ENCODE measurements at regions of chr17 and their contacts with region 1.

Region 1: GRCh38 chr17:57995076-57995956 is 7.3 kb upstream of the VEZF1 start:
- DNase-seq: no peak
- ATAC-seq: peak; percentile 87
- H3K4me3 ChIP-seq: no peak overlapping the region
- H3K27ac ChIP-seq: no peak overlapping the region
- H3K4me1 ChIP-seq: peaks cover 22% of the 10 kb centered on the region
- H3K27me3 ChIP-seq: no peaks in the 10 kb centered on the region
- CTCF ChIP-seq: peak; percentile 69 to 81 (median 75)
- EP300 ChIP-seq: no peak
- POLR2A ChIP-seq: peak; percentile 81
- RAD21 ChIP-seq: peak; percentile 83

Region 2: DNA sequence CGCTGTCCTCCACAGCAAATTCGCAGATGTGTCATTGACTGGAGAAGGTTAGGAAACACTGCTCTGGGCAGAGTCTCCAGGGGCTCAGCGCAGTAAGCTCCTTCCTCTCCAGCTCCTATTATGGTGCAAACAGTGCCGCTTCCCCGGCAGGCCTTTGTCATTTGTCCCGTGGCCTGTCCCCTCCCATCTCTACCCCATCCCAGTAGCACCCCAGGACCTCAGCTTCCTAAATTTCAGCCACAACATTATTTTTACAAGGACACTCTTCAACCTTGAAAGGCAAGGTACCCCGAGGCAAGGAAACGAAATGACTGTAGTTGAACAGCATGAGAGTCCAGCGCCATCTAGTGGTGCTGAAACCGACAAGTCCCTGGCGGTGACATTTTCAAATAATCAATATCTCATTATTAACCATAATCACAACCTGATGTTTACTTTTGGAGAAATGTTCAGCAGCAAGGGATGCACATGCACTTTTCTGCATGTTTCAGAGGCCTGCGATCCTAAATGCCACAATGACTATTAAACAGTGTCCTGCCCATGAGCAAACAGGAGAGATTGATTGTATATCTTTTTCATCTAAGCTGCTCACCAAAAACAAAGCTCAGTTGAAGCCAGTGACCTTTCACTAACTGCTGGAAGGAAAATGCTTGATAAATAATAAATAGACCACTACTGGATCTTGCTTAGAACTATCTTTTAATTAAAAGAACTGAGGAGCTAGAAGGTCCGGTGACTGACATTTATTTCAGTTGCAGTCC is 162.0 kb before region 1 on chr17:
- CTCF ChIA-PET with region 1: interaction called, 21 read pairs
- POLR2A ChIA-PET with region 1: no interaction called
- RAD21 ChIA-PET with region 1: no interaction called
- SMC1A ChIA-PET with region 1: no interaction called
- in situ Hi-C with region 1: no loop called
- intact Hi-C with region 1: no loop called
- DNase-seq: no peak
- ATAC-seq: peak; percentile 95
- H3K4me3 ChIP-seq: 0 out of 2 replicates have a peak overlapping the region, but pooled peaks have one; percentile 4
- H3K27ac ChIP-seq: no peak overlapping the region
- H3K4me1 ChIP-seq: peaks cover 5% of the 10 kb centered on the region; the same call in 1 of the 2 replicates
- H3K27me3 ChIP-seq: no peaks in the 10 kb centered on the region
- CTCF ChIP-seq: peak; percentile 87 to 94 (median 92)
- EP300 ChIP-seq: no peak
- POLR2A ChIP-seq: no peak
- RAD21 ChIP-seq: peak; percentile 74

Region 3: GRCh38 chr17:57868007-57868909 is 127.1 kb before region 1 on chr17:
- CTCF ChIA-PET with region 1: interaction called, 708 read pairs
- POLR2A ChIA-PET with region 1: interaction called, 5 read pairs
- RAD21 ChIA-PET with region 1: interaction called, 6 read pairs
- SMC1A ChIA-PET with region 1: interaction called, 341 read pairs
- in situ Hi-C with region 1: no loop called
- intact Hi-C with region 1: no loop called
- DNase-seq: peak; percentile 47
- ATAC-seq: peak; percentile 93
- H3K4me3 ChIP-seq: no peak overlapping the region
- H3K27ac ChIP-seq: no peak overlapping the region; the same call in 1 of the 2 replicates
- H3K4me1 ChIP-seq: peaks cover 20% of the 10 kb centered on the region
- H3K27me3 ChIP-seq: no peaks in the 10 kb centered on the region; a peak in 1 of 4 replicates
- CTCF ChIP-seq: peak; percentile 7 to 32 (median 32); a peak in 3 of 6 replicates
- EP300 ChIP-seq: no peak
- POLR2A ChIP-seq: no peak
- RAD21 ChIP-seq: no peak

Region 4: GRCh38 chr17:57902800-57903759 is 92.2 kb before region 1 on chr17:
- CTCF ChIA-PET with region 1: interaction called, 134 read pairs
- POLR2A ChIA-PET with region 1: interaction called, 9 read pairs
- RAD21 ChIA-PET with region 1: interaction called, 18 read pairs
- SMC1A ChIA-PET with region 1: interaction called, 26 read pairs
- in situ Hi-C with region 1: loop called (anchors 10 kb)
- intact Hi-C with region 1: no loop called
- DNase-seq: peak; percentile 89
- ATAC-seq: peak; percentile 82
- H3K4me3 ChIP-seq: peak overlapping the region; percentile 35; the same call in 1 of the 2 replicates
- H3K27ac ChIP-seq: peak overlapping the region; percentile 85
- H3K4me1 ChIP-seq: peaks cover 58% of the 10 kb centered on the region
- H3K27me3 ChIP-seq: no peaks in the 10 kb centered on the region
- CTCF ChIP-seq: no peak
- EP300 ChIP-seq: peak; percentile 53 to 77; a peak in 3 of 4 replicates
- POLR2A ChIP-seq: 0 out of 2 replicates have a peak, but pooled peaks have one; percentile 27
- RAD21 ChIP-seq: peak; percentile 26; the same call in 1 of the 2 replicates

Region 5: GRCh38 chr17:57946798-57947358 is 48.4 kb before region 1 on chr17:
- CTCF ChIA-PET with region 1: interaction called, 55 read pairs
- POLR2A ChIA-PET with region 1: interaction called, 6 read pairs
- RAD21 ChIA-PET with region 1: interaction called, 13 read pairs
- SMC1A ChIA-PET with region 1: interaction called, 33 read pairs
- in situ Hi-C with region 1: no loop called
- intact Hi-C with region 1: no loop called
- DNase-seq: peak; percentile 73
- ATAC-seq: peak; percentile 90
- H3K4me3 ChIP-seq: peak overlapping the region; percentile 28; the same call in 1 of the 2 replicates
- H3K27ac ChIP-seq: no peak overlapping the region
- H3K4me1 ChIP-seq: peaks cover 54% of the 10 kb centered on the region
- H3K27me3 ChIP-seq: no peaks in the 10 kb centered on the region
- CTCF ChIP-seq: no peak
- EP300 ChIP-seq: no peak
- POLR2A ChIP-seq: no peak
- RAD21 ChIP-seq: no peak

Region 6: DNA sequence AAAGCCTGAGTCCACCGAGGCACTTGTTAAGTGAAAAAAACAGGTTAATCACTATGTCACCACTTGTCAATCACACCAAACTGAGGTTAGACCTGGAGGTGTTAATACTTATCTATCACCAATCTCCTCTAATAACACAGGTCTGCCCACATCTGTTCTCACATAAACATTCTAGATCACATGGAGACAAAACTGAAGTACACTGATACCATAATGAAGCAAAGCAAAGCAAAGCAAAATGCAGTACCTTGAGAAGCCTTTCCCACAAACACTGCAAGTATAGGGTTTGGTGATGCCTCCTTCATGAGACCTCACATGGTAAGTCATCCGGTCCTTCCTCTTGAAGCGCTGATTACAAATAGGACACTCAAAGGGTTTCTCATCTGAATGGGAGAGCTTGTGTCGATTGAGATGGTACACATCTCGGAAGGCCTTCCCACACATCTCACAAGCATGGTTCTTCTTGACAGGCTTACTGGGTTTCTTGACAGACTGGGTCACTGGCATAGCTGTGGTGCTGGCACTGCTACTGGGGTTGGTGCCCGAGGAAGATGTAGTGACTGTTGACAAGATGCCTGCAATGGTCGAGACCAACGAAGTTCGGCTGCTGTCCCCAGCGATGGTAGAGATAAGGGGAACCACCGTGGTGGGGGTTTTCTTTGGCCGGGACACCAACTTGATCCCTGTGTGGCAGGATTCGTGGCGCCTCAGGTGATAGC is 12.7 kb before region 1 on chr17:
- CTCF ChIA-PET with region 1: interaction called, 195 read pairs
- POLR2A ChIA-PET with region 1: interaction called, 6 read pairs
- RAD21 ChIA-PET with region 1: interaction called, 29 read pairs
- SMC1A ChIA-PET with region 1: interaction called, 72 read pairs
- in situ Hi-C with region 1: no loop called
- intact Hi-C with region 1: no loop called
- DNase-seq: no peak
- ATAC-seq: peak; percentile 13
- H3K4me3 ChIP-seq: 0 out of 2 replicates have a peak overlapping the region, but pooled peaks have one; percentile 5
- H3K27ac ChIP-seq: no peak overlapping the region
- H3K4me1 ChIP-seq: no peaks in the 10 kb centered on the region
- H3K27me3 ChIP-seq: no peaks in the 10 kb centered on the region
- CTCF ChIP-seq: no peak
- EP300 ChIP-seq: no peak
- POLR2A ChIP-seq: no peak
- RAD21 ChIP-seq: no peak

Region 7: DNA sequence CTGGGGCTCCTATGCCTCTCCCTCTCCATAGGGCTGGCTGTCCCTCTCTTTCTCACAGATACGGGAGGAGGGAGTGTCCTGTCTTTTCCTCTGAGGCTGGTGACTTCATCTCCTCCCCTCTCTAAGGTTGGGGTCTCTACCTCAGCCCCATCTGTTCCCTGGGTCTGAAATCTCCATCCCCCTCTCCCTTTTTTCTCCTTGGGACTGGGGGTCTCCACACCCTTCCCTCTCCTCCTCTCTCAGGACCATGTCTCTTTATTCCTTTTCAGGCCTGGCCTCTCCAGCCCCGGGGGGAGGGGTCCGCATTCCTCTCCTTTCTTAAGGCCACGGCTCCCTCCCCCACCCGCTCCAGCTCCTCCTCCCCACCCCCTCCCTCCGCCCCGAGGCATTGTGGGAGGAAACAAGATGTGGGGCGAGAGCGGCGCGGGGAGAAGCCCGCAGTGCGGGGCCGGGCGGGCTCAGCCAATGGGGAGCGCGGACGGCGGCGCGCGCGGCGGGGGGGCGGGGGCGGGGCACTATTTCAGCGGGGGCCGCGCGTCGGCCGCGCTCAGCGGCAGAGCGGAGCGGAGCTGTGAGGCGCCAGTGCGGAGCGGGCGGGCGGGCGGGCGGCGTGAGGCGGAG is 87.7 kb after region 1 on chr17 and contains the start of gene DYNLL2:
- CTCF ChIA-PET with region 1: interaction called, 15 read pairs
- POLR2A ChIA-PET with region 1: interaction called, 3 read pairs
- RAD21 ChIA-PET with region 1: interaction called, 4 read pairs
- SMC1A ChIA-PET with region 1: interaction called, 4 read pairs
- in situ Hi-C with region 1: no loop called
- intact Hi-C with region 1: no loop called
- DNase-seq: peak; percentile 25
- ATAC-seq: peak; percentile 87
- H3K4me3 ChIP-seq: peak within 1 kb of the TSS; percentile 78
- H3K27ac ChIP-seq: peak within 1 kb of the TSS; percentile 76
- H3K4me1 ChIP-seq: peaks cover 15% of the 10 kb centered on the region
- H3K27me3 ChIP-seq: peaks cover 0 to 9% of the 10 kb centered on the region in 2 experiments; a peak in 1 of 4 replicates
- CTCF ChIP-seq: no peak
- EP300 ChIP-seq: no peak
- POLR2A ChIP-seq: no peak
- RAD21 ChIP-seq: no peak
- polyA plus RNA-seq, gene DYNLL2: 1.9 to 2.8 TPM

Measured in GM12878 (cell line).